Astrocyte of the cerebellum (primary cell): ENCODE measurements at regions of chr20 and their contacts with region 1.

Region 1: GRCh38 chr20:9555781-9556180 is 41.4 kb downstream of the LAMP5 start:
- DNase-seq: no peak
- H3K4me3 ChIP-seq: no peak overlapping the region
- CTCF ChIP-seq: no peak

Region 2: DNA sequence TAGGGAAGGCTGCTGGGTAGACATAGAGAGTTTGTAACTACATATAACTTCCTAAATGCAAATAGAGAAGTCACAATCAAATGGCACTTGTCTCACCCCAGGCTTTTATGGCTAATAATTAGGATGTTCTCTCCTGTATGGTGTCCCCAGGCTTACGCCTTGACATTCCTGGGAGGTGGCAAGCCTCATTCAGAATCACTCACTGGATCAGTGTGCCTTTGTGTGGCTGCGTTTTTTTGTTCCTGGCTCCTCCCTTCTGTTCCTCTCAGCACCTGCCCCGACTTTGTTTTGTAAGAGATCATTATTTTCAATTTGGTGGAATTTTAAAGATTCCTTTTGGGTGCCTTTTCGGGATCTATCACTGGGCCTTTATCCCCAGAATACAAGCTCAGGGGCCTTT is 35.7 kb before region 1 on chr20:
- in situ Hi-C with region 1: loop called (anchors 5 kb)
- DNase-seq: no peak
- H3K4me3 ChIP-seq: no peak overlapping the region
- CTCF ChIP-seq: no peak